GM12878 (cell line): ENCODE measurements at regions of chr1 and their contacts with region 1.

Region 1: DNA sequence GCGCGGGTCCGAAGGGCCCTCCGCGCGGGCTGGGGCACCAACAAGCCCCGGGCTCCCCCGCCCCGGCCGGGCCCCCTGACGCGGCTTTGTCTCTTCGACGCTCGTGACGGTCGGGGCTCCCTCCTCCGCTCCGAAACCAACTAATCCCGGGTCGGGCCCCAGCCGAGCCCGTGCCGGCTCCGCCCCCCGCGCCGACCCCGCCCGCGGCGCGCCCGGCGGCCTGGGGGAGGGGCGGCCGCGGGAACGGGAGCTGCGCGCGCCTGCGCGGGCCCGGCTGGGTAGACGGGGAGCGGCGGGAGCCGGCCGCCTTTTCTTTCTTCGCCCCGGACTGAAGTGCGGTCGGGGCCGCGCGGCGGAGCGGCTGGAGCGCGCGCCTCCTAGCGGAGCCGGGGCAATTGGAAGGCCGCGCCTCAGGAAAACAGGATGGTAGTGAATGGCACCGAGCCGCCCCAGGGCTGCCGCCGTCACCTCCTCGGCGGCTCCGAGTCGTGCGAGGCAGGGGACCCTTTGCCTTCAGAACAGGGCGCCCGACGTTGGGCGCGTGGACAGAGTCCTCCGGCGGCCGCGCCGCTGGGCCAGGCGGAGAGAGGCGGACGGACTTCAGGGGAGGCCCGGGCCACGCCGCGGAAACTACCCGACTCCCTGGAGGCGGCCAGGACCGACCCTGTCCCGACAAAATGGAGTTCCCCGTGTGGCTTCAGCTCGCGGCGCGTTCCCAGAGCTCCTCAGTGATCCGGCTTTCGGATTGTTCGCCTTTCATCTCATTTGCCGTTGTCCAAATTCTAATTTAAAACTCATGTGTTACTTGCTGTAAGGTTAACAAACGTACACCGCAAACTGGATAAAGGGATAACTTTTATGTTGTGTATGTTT is at the start of gene TP53BP2:
- DNase-seq: no peak
- ATAC-seq: peak; percentile 78
- H3K4me3 ChIP-seq: peak within 1 kb of the TSS; percentile 76
- H3K27ac ChIP-seq: peak within 1 kb of the TSS; percentile 60
- H3K4me1 ChIP-seq: peaks cover 6% of the 10 kb centered on the region; the same call in 1 of the 2 replicates
- H3K27me3 ChIP-seq: no peaks in the 10 kb centered on the region; a peak in 2 of 4 replicates
- CTCF ChIP-seq: peak; percentile 37 to 63 (median 59); a peak in 4 of 6 replicates
- EP300 ChIP-seq: 0 out of 4 replicates have a peak, but pooled peaks of 1 of the 2 experiments have one; percentile 21
- POLR2A ChIP-seq: peak; percentile 75
- RAD21 ChIP-seq: 0 out of 2 replicates have a peak, but pooled peaks have one; percentile 16
- polyA plus RNA-seq, gene TP53BP2: 1.6 to 1.7 TPM

Region 2: GRCh38 chr1:223831755-223832636 is 14.1 kb before region 1 on chr1:
- CTCF ChIA-PET with region 1: interaction called, 3 read pairs
- POLR2A ChIA-PET with region 1: interaction called, 5 read pairs
- RAD21 ChIA-PET with region 1: interaction called, 3 read pairs
- SMC1A ChIA-PET with region 1: interaction called, 4 read pairs
- in situ Hi-C with region 1: no loop called
- intact Hi-C with region 1: loop called (anchors 1 kb)
- DNase-seq: no peak
- ATAC-seq: peak; percentile 66
- H3K4me3 ChIP-seq: no peak overlapping the region
- H3K27ac ChIP-seq: no peak overlapping the region
- H3K4me1 ChIP-seq: peaks cover 4% of the 10 kb centered on the region; the same call in 1 of the 2 replicates
- H3K27me3 ChIP-seq: no peaks in the 10 kb centered on the region
- CTCF ChIP-seq: no peak
- EP300 ChIP-seq: no peak
- POLR2A ChIP-seq: no peak
- RAD21 ChIP-seq: no peak